ENCODE measurements at regions of chr18 and their contacts with region 1.

Region 1: GRCh38 chr18:57353940-57354461 is 1.6 kb downstream of the ST8SIA3 start:
- DNase-seq: peak; percentile 58
- ATAC-seq: no peak
- H3K4me3 Mint-ChIP-seq: no peak overlapping the region
- H3K27ac Mint-ChIP-seq: no peak overlapping the region
- H3K4me1 Mint-ChIP-seq: no peaks in the 10 kb centered on the region
- H3K27me3 Mint-ChIP-seq: peaks cover 44% of the 10 kb centered on the region

Region 2: GRCh38 chr18:57107140-57107832 is 246.7 kb before region 1 on chr18:
- CTCF ChIA-PET with region 1: no interaction called
- POLR2A ChIA-PET with region 1: no interaction called
- intact Hi-C with region 1: loop called in 1 of 2 experiments (anchors 10 kb)
- DNase-seq: no peak
- ATAC-seq: no peak
- H3K4me3 Mint-ChIP-seq: no peak overlapping the region
- H3K27ac Mint-ChIP-seq: no peak overlapping the region
- H3K4me1 Mint-ChIP-seq: no peaks in the 10 kb centered on the region
- H3K27me3 Mint-ChIP-seq: peaks cover 12% of the 10 kb centered on the region

Region 3: DNA sequence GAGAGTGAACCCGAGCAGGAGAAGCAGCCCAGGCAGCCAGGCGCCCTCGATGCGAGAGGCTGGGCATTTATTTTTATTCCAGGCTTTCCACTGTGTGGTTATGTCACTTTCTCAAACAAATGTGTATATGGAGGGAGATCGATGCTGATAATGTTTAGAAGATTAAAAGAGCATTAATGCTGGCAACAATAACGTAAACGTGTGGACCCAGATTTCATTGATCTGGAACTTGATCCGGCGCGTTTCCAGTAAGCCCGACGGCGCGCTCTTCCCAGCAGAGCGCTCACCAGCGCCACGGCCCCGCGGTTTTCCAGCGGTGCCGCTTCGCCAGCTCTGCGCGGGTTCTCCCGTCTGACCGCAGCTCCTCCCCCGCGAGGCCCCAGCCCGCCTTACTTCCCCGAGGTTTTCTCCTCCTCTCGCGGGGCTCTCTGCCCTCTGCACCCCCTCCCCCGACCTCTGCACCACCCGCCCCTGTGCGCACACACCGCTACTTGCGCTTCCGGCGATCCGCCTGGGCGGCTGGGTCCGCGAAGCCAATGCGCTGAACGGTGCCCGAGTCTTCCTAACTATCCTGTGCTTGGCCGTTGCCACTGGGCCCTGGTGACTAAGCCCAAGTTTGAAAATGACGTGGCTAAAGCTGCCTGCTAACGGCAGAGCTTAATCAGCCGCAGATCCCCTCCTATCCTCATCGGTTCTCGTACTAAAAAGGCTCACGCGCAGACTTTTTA is 87.2 kb after region 1 on chr18:
- CTCF ChIA-PET with region 1: no interaction called
- POLR2A ChIA-PET with region 1: no interaction called
- intact Hi-C with region 1: loop called (anchors 2 to 5 kb)
- DNase-seq: peak; percentile 63
- ATAC-seq: peak; percentile 66
- H3K4me3 Mint-ChIP-seq: peak overlapping the region; percentile 55
- H3K27ac Mint-ChIP-seq: no peak overlapping the region
- H3K4me1 Mint-ChIP-seq: peaks cover 39% of the 10 kb centered on the region
- H3K27me3 Mint-ChIP-seq: peaks cover 82% of the 10 kb centered on the region

Region 4: DNA sequence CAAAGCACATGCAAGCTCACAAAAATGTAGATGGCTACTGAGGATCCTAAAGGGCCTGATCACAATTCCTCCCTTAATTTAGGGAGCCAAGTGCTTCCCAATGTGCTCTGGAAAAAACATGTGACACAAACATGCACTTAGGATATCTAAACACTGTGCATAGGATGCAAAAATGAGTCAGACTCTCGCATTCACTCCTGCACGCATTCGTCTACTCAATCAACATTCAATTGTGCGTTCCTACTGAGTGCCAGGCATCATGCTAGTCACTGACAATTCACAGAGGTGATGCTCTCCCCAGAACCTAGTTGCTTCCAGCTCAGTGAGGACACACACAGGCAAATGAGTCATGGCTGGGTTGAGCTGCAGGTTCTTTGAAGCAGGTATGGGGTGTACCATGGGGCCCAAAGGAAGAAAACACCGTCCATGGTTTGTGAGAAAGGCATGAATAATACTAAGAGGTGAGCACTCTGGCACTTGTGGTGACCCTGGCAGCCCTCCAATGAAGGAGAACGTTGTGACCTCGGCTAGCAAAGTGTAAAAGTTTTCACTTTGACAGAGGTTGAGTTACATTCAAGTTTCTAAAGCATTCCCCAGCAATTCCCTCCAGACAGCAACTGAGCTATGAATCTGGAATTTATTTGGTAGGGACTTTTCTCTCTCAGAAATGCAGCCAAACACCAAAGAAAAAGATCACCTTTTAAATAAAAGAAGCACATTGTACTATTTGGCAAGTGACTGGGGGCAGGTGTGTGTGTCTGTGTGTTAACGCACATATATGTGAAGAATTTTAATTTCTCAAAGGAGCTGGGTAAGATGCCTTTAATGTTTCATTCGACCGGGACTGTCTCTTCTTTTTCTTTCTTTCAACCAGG is 1101.5 kb after region 1 on chr18:
- CTCF ChIA-PET with region 1: no interaction called
- POLR2A ChIA-PET with region 1: no interaction called
- intact Hi-C with region 1: no loop called
- DNase-seq: peak; percentile 61
- ATAC-seq: peak; percentile 95
- H3K4me3 Mint-ChIP-seq: no peak overlapping the region
- H3K27ac Mint-ChIP-seq: no peak overlapping the region
- H3K4me1 Mint-ChIP-seq: peaks cover 2% of the 10 kb centered on the region
- H3K27me3 Mint-ChIP-seq: no peaks in the 10 kb centered on the region

Measured in activated CD4-positive, alpha-beta T cell treated with anti-CD3 and anti-CD28 coated beads for 36 hours (primary cell).